Colonic mucosa (tissue), 4 donors: ENCODE measurements at regions of chr3 and their contacts with region 1.

Region 1: DNA sequence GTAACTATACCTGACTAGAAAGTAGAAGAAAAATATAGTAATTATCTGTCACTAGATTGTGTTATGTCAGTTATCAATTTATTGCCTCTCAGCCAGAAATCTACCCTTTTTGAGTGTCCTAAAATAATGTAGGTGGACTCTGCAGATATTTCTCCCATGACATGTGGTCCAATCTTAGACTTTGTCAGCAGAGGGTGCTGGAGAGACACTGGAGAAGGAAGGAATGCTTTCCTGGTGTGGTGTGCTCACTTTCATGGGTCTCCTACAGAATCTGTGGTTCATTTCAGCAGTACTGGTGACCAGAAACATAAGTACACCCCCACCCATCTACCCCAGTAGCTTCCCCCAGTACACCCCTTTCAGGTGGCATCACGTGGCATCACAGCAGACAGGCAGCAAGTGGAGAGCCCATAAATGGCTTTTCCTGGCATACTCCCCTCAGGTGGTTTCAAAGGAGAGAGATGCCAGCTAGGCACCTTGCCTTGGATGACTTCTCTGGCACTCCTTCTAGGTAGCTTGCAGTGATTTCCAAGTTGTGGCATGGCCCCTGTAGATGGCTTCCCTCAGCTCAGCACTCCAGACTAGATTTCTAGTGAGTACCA is 114.7 kb downstream of the GADL1 start:
- DNase-seq: peak; percentile 36
- H3K4me3 ChIP-seq: no peak overlapping the region
- H3K27ac ChIP-seq: no peak overlapping the region
- H3K4me1 ChIP-seq: no peaks in the 10 kb centered on the region
- H3K27me3 ChIP-seq: no peaks in the 10 kb centered on the region
- CTCF ChIP-seq: peak; percentile 38

Region 2: DNA sequence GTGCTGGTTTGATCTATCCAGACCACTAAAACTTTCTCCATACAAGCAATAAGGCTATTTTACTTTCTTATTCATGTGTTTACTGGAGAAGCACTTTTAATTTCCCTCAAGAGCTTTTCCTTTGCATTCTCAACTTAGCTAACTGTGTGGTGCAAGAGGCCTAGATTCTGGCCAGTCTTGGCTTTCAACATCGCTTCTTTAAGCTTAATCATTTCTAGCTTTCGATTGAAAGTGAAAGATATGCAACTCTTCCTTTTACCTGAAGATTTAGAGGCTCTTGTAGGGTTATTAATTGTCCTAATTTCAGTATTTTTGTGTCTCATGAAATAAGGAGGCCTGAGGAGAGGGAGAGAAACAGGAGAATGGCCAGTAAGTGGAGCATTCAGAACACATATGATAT is 349.5 kb after region 1 on chr3:
- intact Hi-C with region 1: loop called (anchors 5 kb)
- DNase-seq: no peak
- H3K4me3 ChIP-seq: no peak overlapping the region
- H3K27ac ChIP-seq: no peak overlapping the region
- H3K4me1 ChIP-seq: no peaks in the 10 kb centered on the region
- H3K27me3 ChIP-seq: no peaks in the 10 kb centered on the region
- CTCF ChIP-seq: no peak

Region 3: DNA sequence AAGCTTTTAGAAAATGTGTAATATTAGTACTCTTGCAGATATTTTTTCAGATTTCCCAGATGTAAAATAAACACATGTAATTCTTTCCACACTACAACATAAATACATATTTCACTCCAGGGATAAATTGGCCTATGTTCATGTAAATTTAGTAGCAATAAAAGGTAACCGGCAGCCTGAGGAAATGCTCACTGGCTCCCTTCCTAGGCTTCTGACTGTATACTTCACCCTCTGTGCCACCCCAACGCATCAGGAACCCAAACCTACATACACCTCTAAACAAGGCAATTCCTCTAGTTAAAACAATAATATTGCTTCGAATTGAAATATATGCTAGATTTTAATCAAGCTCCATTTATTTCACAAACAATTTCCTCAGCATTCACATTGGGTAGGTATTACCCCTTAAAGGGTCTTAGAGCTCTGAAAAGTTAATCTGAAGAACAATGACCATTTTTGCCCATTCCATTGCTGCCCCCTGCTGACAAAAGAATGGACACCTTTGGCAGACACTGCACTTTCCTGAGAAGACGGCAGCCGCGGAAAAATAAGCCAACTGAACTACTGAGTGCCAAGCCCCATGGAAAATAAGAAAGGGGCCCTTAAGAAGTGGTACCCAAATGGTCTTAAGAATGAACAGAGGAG is 988.8 kb after region 1 on chr3:
- intact Hi-C with region 1: loop called (anchors 10 kb)
- DNase-seq: peak; percentile 61
- H3K4me3 ChIP-seq: no peak overlapping the region
- H3K27ac ChIP-seq: no peak overlapping the region
- H3K4me1 ChIP-seq: no peaks in the 10 kb centered on the region
- H3K27me3 ChIP-seq: no peaks in the 10 kb centered on the region
- CTCF ChIP-seq: peak; percentile 34